Prostate gland (tissue), 2 donors: ENCODE measurements at regions of chr17 and their contacts with region 1.

Region 1: GRCh38 chr17:10115071-10115539 is 83.3 kb downstream of the GAS7 start:
- DNase-seq: peak; percentile 79
- H3K4me3 ChIP-seq: no peak overlapping the region
- H3K27ac ChIP-seq: peak overlapping the region; percentile 53 to 64
- H3K4me1 ChIP-seq: no peaks in the 10 kb centered on the region
- H3K27me3 ChIP-seq: no peaks in the 10 kb centered on the region
- CTCF ChIP-seq: no peak
- POLR2A ChIP-seq: no peak

Region 2: DNA sequence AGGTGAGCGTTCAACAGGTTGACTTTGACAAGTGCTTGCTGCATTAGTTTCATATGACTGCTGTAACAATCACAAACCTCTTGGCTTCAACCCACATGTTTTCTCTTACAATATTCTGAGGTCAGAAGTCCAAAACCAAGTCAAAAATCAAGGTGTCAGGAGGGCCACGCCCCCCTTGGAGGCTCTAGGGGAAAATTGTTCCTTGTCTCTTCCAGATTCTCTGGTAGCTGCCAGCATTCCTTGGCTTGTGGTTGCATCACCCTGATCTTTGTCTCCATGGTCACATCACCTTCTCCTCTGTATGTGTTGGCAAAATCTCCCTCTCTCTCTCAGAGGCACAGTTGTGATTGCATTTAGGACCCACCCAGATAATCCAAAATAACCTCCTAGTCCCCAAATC is 22.6 kb before region 1 on chr17:
- intact Hi-C with region 1: loop called (anchors 1 kb)
- DNase-seq: no peak
- H3K4me3 ChIP-seq: no peak overlapping the region
- H3K27ac ChIP-seq: no peak overlapping the region
- H3K4me1 ChIP-seq: no peaks in the 10 kb centered on the region
- H3K27me3 ChIP-seq: no peaks in the 10 kb centered on the region
- CTCF ChIP-seq: no peak
- POLR2A ChIP-seq: no peak

Region 3: DNA sequence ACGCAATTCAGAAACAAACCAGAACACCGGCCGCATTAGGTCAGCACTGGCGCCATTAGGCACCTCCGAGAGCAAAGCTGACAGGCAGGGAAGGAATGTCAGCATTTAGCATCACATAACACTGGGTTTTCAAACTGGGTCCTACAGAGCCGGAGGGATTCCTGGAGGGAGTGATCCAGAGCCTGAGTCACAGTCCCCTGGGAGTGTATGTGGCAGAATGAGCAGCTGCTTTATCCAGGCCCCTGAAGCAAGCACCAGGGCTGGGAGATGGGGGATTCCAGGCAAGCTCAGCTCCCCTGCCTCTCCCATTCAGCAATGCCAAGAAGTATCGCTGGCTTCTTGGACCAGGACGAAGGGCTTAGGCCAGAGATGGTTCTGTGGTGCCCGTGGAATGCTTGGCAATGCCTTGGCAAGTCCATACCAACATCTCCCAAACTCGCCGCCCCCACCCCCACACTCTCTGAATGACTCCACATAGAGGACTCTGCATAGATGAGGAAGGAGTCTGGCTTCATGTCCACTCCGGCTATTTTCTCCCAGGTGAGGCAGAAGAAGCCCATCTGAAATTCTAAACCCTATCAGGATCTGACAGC is 62.9 kb after region 1 on chr17:
- intact Hi-C with region 1: no loop called
- DNase-seq: no peak
- H3K4me3 ChIP-seq: no peak overlapping the region
- H3K27ac ChIP-seq: no peak overlapping the region
- H3K4me1 ChIP-seq: no peaks in the 10 kb centered on the region
- H3K27me3 ChIP-seq: no peaks in the 10 kb centered on the region
- CTCF ChIP-seq: no peak
- POLR2A ChIP-seq: no peak

Region 4: GRCh38 chr17:10210151-10210930 is 95.2 kb after region 1 on chr17:
- intact Hi-C with region 1: loop called (anchors 10 kb)
- DNase-seq: peak; percentile 88
- H3K4me3 ChIP-seq: no peak overlapping the region
- H3K27ac ChIP-seq: peak overlapping the region; percentile 58 to 61
- H3K4me1 ChIP-seq: peaks cover 9% of the 10 kb centered on the region
- H3K27me3 ChIP-seq: no peaks in the 10 kb centered on the region
- CTCF ChIP-seq: peak in 1 of 4 experiments; percentile 11
- POLR2A ChIP-seq: no peak